Activated CD8-positive, alpha-beta T cell treated with anti-CD3 and anti-CD28 coated beads, Interleukin-2, amount 10 ng/mL, durations not matched to agents 7 days and 5 days (primary cell): ENCODE measurements at regions of chr2 and their contacts with region 1.

Region 1: GRCh38 chr2:136117909-136118818 is at the start of gene CXCR4:
- DNase-seq: peak; percentile 91
- ATAC-seq: peak; percentile 29
- H3K4me3 Mint-ChIP-seq: peak within 1 kb of the TSS; percentile 98
- H3K27ac Mint-ChIP-seq: peak within 1 kb of the TSS; percentile 98
- H3K4me1 Mint-ChIP-seq: peaks cover 52% of the 10 kb centered on the region
- H3K27me3 Mint-ChIP-seq: peaks cover 6% of the 10 kb centered on the region
- total RNA-seq, gene CXCR4: 219 to 226 TPM

Region 2: GRCh38 chr2:136052369-136053362 is 65.5 kb before region 1 on chr2:
- CTCF ChIA-PET with region 1: interaction called, 5 read pairs
- POLR2A ChIA-PET with region 1: interaction called, 25 read pairs
- DNase-seq: peak; percentile 33
- ATAC-seq: no peak
- H3K4me3 Mint-ChIP-seq: peak overlapping the region; percentile 44
- H3K27ac Mint-ChIP-seq: peak overlapping the region; percentile 95
- H3K4me1 Mint-ChIP-seq: peaks cover 94% of the 10 kb centered on the region
- H3K27me3 Mint-ChIP-seq: no peaks in the 10 kb centered on the region

Region 3: DNA sequence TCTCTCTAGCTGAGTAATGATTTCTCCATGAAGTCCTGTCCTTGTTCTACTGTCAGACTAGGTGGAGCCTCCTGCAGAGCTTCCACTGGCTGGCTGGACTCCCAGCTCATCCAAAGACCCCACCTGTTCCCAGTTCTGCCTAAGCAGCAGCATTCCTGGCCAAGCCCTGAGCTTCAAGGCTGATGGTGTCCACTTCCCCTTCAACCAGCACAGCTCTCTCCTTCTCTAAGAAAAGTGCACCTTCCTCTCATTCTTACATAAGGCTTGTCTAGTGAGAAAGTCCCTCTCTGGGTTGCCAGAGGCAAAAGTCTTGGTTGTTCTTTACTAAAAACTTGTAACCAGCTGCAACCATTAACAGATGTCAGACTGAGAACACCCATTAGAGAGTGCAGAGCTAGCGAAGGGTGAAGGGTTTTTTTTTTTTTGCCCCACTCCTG is 59.1 kb before region 1 on chr2:
- CTCF ChIA-PET with region 1: interaction called, 5 read pairs
- POLR2A ChIA-PET with region 1: interaction called, 24 read pairs
- DNase-seq: no peak
- ATAC-seq: no peak
- H3K4me3 Mint-ChIP-seq: no peak overlapping the region
- H3K27ac Mint-ChIP-seq: no peak overlapping the region
- H3K4me1 Mint-ChIP-seq: peaks cover 87% of the 10 kb centered on the region
- H3K27me3 Mint-ChIP-seq: no peaks in the 10 kb centered on the region

Region 4: DNA sequence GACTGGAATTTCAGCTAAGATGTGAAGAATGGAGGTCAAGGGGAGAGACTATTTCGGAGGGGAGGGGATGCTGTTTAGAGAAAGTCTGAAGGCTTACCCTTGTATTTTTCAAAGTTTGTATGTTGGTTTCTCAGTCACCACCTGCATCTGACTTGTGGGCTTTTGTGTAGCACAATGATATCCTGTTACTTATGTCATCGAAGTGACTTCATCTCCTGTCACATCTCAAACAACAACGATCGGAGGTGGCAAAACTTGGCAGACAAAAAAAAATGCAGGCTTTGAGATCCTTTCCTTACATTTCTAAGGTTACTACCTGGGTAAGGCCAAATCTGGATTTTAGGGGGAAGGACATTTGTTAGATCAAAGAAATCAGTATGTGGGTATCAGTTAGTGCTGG is 11.4 kb after region 1 on chr2:
- CTCF ChIA-PET with region 1: interaction called, 6 read pairs
- POLR2A ChIA-PET with region 1: interaction called, 56 read pairs
- DNase-seq: peak; percentile 64
- ATAC-seq: peak; percentile 43
- H3K4me3 Mint-ChIP-seq: peak overlapping the region; percentile 53
- H3K27ac Mint-ChIP-seq: peak overlapping the region; percentile 88
- H3K4me1 Mint-ChIP-seq: peaks cover 97% of the 10 kb centered on the region
- H3K27me3 Mint-ChIP-seq: peaks cover 3% of the 10 kb centered on the region

Region 5: GRCh38 chr2:136135921-136136906 is 18.1 kb after region 1 on chr2:
- CTCF ChIA-PET with region 1: interaction called, 14 read pairs
- POLR2A ChIA-PET with region 1: interaction called, 56 read pairs
- DNase-seq: peak; percentile 86
- ATAC-seq: peak; percentile 71
- H3K4me3 Mint-ChIP-seq: peak overlapping the region; percentile 44
- H3K27ac Mint-ChIP-seq: peak overlapping the region; percentile 95
- H3K4me1 Mint-ChIP-seq: peaks cover 91% of the 10 kb centered on the region
- H3K27me3 Mint-ChIP-seq: peaks cover 11% of the 10 kb centered on the region

Region 6: DNA sequence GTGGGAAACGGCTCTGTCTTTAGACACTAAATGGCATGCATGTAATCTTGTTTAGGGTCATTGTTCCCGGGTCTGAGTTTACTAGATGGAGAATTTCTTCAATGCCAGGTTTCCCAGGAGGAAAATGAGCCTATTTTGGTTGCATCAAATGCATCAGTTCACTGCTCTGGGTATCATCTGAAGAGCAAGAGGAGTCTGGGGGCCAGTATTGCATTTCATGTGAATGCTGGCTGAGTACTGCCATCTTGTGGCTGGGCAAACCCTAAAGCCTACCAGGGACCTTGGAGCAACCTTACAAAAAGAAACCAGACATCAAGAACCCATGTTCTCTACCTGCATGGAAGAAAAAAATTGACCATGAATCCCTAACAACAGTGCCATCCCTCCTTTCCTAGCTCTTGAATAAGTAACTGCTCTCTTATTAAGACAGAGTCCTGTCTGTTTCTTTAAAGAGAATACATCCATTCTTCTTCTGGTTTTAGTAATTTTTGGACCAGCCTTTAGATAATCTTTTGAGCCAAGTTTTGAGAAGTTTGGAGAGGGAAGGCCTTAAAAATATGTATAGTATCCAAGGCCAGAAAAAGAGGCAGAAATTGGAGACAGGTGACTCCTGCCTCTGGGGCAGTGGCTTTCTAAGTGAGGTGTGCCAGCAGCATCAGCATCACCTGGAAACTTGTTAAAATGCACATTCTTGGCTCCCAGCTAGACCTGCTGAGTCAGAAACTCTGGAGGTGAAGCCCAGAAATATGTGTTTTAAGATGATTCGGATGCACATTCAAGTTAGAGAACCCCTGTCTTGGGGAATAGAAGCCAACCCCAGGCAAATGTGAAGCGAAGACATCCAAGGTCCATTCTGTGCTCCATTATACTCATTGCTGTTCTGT is 260.8 kb after region 1 on chr2:
- CTCF ChIA-PET with region 1: interaction called, 7 read pairs
- POLR2A ChIA-PET with region 1: interaction called, 17 read pairs
- DNase-seq: peak; percentile 87
- ATAC-seq: peak; percentile 50
- H3K4me3 Mint-ChIP-seq: no peak overlapping the region
- H3K27ac Mint-ChIP-seq: no peak overlapping the region
- H3K4me1 Mint-ChIP-seq: peaks cover 82% of the 10 kb centered on the region
- H3K27me3 Mint-ChIP-seq: no peaks in the 10 kb centered on the region